ENCODE measurements at regions of chr17 and their contacts with region 1.

Region 1: DNA sequence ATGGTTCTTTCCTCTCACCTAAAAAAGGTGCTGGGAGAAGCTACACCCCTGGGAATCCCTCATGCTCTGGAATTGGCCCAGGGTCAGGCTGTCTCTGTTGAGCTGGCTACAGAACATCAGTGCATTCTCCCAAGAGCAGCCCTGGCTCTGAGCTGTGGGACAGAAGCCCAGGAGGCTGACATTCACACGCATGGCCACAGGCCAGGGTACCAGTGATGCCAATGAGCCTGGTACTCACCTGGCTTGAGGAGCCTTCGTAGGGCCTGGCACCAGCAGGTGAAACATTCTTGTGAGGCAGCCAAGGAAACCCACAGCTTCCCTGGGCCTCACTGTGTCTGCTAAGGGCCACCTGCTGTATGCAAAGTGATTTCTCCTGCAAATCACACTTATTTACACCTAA is 121.7 kb upstream of the CCL2 start:
- DNase-seq: no peak
- H3K4me3 ChIP-seq: no peak overlapping the region
- H3K27ac ChIP-seq: no peak overlapping the region
- H3K4me1 ChIP-seq: peaks cover 2 to 15% (median 10%) of the 10 kb centered on the region in 4 experiments
- H3K27me3 ChIP-seq: no peaks in the 10 kb centered on the region
- CTCF ChIP-seq: no peak
- EP300 ChIP-seq: no peak
- POLR2A ChIP-seq: no peak
- RAD21 ChIP-seq: no peak

Region 2: GRCh38 chr17:34081269-34081668 is 52.1 kb before region 1 on chr17:
- CTCF ChIA-PET with region 1: interaction called, 13 read pairs
- POLR2A ChIA-PET with region 1: no interaction called
- DNase-seq: peak in 1 of 2 experiments; percentile 57
- H3K4me3 ChIP-seq: no peak overlapping the region
- H3K27ac ChIP-seq: no peak overlapping the region
- H3K4me1 ChIP-seq: peaks cover 0 to 9% (median 2%) of the 10 kb centered on the region in 4 experiments; a peak in 4 of 7 replicates
- H3K27me3 ChIP-seq: no peaks in the 10 kb centered on the region
- CTCF ChIP-seq: peak; percentile 32 to 82 (median 81)
- EP300 ChIP-seq: no peak
- POLR2A ChIP-seq: no peak
- RAD21 ChIP-seq: peak; percentile 72 to 79

Region 3: DNA sequence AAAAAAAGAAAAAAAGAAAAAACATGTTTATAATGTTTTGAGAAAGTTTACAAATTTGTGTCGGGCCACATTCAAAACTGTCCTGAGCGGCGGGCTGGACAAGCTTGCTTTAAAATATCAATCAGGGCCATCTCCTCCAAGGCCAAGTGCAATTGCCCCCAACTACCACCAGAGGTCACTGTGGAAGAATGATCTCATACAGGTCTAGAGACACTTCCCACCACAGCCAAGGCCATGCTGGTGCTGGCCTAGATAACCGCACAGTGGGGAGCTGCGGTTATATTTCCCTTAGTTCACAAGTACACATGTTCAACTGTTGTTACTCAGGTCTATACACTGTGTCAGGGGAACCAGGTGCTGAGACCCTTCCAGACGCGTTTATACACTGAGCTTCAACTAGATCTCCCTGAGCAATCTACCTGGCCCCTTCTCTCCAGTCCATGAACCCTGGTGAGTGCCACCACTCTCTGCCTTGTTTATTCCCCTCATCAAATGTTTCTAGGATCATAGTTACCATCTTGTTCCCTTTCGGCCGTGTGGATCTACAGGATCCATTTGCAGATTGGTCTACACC is 38.0 kb after region 1 on chr17:
- CTCF ChIA-PET with region 1: interaction called, 13 read pairs
- POLR2A ChIA-PET with region 1: interaction called, 3 read pairs
- DNase-seq: peak in 1 of 2 experiments; percentile 82
- H3K4me3 ChIP-seq: no peak overlapping the region
- H3K27ac ChIP-seq: no peak overlapping the region
- H3K4me1 ChIP-seq: no peaks in the 10 kb centered on the region
- H3K27me3 ChIP-seq: no peaks in the 10 kb centered on the region
- CTCF ChIP-seq: peak; percentile 69 to 90 (median 80)
- EP300 ChIP-seq: no peak
- POLR2A ChIP-seq: no peak
- RAD21 ChIP-seq: peak; percentile 49 to 69

Region 4: DNA sequence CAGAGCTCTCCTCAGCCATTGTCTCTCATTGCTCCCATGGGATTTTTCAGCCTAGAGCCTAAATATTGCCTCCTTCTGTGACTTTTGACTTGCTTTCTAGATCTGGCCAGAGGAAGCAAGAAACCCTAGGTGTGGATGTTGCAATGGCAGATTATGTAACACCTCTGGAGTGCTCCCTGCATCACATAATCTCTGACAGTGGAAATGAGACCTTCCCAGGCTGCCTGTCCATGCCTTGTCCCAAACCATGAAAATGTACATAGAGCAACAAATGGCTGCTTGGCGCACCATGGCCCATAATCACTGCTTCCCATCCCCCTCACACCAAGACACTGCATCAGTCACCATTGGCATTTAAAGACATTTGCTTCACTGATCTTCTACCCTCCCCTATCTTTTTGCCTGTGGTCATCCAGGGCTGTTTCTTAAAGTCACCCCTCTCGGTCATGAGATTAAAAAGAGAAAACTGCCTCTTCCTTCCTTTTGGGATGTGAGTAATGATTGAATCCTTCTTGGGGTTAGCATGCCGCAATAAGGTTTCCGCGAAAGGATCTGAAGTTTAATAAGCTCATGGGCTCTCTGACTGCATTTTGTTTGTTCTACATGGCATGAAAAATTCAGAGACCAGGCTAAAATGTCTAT is 87.5 kb after region 1 on chr17:
- CTCF ChIA-PET with region 1: no interaction called
- POLR2A ChIA-PET with region 1: no interaction called
- DNase-seq: no peak
- H3K4me3 ChIP-seq: no peak overlapping the region
- H3K27ac ChIP-seq: no peak overlapping the region
- H3K4me1 ChIP-seq: no peaks in the 10 kb centered on the region
- H3K27me3 ChIP-seq: no peaks in the 10 kb centered on the region
- CTCF ChIP-seq: no peak
- EP300 ChIP-seq: no peak
- POLR2A ChIP-seq: no peak
- RAD21 ChIP-seq: no peak

Measured in H1 (cell line).